Activated CD4-positive, alpha-beta T cell treated with anti-CD3 and anti-CD28 coated beads, Interleukin-2, amount 10 ng/mL, durations not matched to agents 24 days and 14 days (primary cell): ENCODE measurements at regions of chr7 and their contacts with region 1.

Region 1: DNA sequence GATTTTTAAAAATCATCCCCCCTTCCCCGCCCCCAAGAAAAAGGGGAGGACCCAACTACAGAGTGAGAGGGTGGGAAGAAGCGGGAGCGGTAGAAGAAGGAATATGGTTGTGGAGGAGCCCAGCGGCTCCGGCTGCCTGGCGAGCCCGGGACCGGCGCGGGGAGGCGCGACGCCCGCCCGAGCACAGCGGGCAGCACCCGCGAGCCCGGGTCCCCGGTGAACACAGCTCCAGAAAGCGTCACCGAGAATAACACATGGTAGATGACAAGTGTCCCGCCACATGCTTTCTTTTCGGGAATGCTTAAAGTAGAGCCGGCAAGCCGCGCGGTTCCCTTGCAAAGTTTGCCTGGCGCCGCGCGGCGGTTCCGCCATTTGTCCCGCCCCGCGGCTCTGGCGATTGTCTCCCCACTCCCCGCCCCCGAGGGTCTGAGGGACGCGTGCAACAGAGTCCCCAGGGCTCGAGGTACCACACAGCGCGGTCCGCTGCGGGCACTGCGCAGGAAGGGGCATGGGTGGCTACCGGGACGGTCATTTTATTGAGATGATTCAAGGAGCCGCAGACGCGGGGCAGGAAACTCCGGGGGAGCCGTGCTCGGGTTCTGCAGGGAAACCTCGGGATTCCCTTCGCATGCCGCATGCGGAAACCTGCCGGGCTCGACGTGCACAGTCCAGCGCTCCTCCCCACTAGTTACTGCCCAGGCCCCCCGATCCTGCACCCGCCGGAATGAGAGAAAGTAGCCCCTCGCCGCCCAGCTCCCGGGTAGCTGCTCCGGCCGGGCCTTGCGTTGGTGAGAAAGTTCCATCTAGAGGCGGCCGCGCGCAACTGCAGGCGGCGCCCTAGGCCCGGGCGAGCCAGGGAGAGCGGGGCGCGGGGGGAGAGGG is 781 bp upstream of the GRM8 start:
- DNase-seq: peak; percentile 88
- H3K4me3 Mint-ChIP-seq: peak overlapping the region; percentile 87
- H3K27ac Mint-ChIP-seq: no peak overlapping the region
- H3K4me1 Mint-ChIP-seq: peaks cover 7% of the 10 kb centered on the region
- H3K27me3 Mint-ChIP-seq: peaks cover 75% of the 10 kb centered on the region

Region 2: DNA sequence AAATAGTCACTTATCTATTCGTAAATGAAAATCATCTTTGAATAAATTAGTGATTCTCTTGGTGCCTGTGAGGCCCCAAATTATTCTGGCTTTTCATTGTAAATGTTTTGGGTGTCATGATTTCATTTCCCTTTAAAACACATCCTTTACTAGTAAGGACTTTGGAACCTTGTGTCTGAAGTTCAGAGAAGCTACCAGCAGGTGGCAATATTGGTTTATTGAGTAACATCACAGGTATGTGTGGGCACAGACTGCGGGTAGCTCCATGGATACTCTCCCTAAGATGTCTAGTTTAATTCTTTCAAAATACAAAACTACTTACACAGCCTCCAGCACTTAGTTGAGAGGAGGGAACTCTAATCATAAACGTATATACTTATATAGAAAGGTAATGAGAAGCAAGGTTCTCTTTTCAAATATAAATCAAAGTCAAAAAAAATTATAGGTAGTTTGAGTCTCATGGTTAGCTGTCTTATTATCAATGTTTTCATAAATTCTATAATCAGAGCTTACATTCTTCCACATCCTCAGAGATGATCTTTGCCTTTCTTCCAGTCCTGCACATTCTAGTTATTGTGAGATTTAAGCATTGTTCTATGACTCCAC is 450.4 kb before region 1 on chr7:
- intact Hi-C with region 1: loop called (anchors 2 kb)
- DNase-seq: peak; percentile 81
- H3K4me3 Mint-ChIP-seq: no peak overlapping the region
- H3K27ac Mint-ChIP-seq: no peak overlapping the region
- H3K4me1 Mint-ChIP-seq: no peaks in the 10 kb centered on the region
- H3K27me3 Mint-ChIP-seq: no peaks in the 10 kb centered on the region

Region 3: DNA sequence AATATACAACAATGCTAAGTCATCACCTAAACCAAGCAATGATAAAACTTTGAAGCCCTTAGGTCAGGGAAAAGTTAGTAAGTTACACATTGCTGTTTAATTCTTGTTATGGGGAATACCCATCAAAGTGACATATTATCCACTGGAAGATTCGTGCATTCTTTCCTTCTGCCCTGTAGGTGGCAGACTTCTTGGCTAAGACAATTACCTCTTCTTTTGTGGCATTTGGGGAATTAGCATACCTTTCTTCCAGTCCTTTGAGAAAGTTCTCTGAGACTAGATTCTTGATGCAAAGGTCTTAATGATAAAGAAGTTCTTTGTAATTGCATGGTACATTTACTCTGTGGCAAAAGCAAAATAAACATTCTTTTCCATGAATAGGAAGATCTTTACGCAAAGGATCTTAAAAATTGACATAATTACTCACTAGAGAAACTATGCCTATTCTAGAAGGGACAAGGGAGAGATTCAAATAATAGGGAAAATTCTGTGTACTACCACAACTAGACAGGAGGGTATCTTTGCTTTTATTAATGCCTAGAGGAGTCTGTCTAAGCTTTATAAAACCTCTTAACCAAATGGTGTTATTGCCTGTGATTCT is 396.7 kb before region 1 on chr7:
- intact Hi-C with region 1: loop called (anchors 5 kb)
- DNase-seq: no peak
- H3K4me3 Mint-ChIP-seq: no peak overlapping the region
- H3K27ac Mint-ChIP-seq: no peak overlapping the region
- H3K4me1 Mint-ChIP-seq: no peaks in the 10 kb centered on the region
- H3K27me3 Mint-ChIP-seq: no peaks in the 10 kb centered on the region

Region 4: DNA sequence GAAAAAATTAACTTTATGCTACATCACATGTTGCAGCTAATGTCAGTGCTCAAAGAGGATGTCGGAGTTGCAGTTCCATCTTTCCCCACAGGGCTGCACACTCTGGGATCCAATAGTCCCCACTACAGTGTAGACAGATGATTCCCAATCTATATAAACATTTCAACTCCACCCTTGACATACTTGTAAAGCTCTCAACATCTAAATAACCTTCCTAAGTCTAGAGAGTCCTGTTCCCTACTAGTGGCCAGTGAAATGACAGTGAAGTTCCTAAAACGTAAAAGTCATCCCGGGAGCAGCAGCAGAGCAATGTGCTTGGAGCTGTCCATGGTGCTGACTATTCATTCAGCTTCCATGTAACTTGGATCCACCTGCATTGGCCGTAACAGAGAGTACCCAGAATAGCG is 145.9 kb before region 1 on chr7:
- intact Hi-C with region 1: loop called (anchors 5 kb)
- DNase-seq: peak; percentile 83
- H3K4me3 Mint-ChIP-seq: no peak overlapping the region
- H3K27ac Mint-ChIP-seq: no peak overlapping the region
- H3K4me1 Mint-ChIP-seq: no peaks in the 10 kb centered on the region
- H3K27me3 Mint-ChIP-seq: no peaks in the 10 kb centered on the region

Region 5: DNA sequence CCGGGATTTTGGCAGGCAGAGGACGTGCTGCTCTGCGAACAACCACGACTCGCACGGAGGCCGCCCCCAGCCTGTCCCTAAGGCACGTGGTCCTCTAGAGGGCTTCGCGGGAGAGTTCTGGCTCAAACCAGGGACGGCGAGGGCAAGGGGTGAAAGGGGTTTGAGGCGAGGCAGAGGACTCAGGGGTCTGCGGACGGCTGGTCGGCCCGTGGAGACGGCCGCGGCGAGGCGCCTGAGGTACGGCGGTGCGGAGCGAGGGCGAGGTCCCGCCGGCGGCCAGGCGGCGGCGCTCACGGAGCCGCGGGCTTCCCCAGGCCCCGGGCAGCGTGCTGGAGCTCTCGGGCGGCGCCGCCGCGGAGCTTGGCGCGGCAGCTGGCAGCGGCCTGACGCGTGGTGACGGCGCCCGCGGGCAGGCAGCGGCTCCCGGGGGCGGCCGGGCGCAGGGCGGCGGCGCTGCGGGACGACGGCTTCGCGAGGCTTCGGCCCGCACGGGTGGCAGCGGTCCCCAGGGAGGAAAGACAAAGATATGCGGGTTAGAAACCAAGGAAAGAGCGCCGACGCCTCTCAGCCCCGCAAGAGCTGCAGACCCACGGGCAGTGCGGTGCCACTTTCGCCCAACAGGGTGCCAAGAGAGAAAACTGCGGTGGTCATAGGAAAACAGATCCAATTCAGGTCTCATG is 94.2 kb after region 1 on chr7:
- intact Hi-C with region 1: loop called (anchors 5 kb)
- DNase-seq: peak; percentile 91
- H3K4me3 Mint-ChIP-seq: peak overlapping the region; percentile 43
- H3K27ac Mint-ChIP-seq: no peak overlapping the region
- H3K4me1 Mint-ChIP-seq: peaks cover 4% of the 10 kb centered on the region
- H3K27me3 Mint-ChIP-seq: peaks cover 15% of the 10 kb centered on the region